Right ventricle myocardium superior (tissue), 1 donor: ENCODE measurements at regions of chr7 and their contacts with region 1.

Region 1: DNA sequence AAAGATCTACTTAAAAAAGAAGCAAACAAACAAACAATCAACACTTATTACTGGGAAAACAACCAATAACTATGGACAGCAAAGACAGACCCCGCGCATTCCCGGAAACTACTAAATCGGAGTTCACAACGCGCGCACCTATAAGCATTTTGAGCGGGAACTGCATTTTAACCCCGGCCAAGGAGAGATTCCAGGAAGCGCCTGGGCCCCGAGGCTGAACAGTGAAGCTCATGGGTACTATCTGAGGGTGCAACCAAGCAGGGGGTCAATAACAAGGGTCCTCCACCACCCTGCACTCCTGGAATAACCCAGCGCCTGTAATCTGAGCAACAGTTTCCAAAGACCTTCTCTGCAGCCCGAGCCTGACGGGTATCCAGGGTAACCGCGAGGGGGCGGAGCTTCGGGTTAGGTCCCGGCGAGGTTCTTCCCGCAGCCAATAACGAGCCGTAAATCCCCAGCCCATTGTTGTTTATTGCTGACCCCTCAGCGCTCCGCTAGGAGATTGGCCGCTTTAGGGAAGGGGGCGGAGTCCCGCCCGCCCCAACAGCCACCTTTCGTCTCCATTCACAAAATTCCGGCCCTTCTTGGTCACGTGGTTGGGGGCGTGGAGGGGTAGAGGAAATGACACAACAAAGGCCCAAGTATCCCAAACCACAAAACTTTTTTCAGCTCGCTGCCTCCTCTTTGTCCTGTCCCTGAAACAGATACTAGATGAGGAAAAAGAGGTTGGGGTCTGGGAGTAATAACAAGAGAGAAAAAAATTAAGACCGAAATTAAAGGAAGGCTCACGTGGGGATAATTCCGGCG is 1.7 kb upstream of the ETV1 start:
- DNase-seq: peak; percentile 96
- ATAC-seq: peak; percentile 95

Region 2: GRCh38 chr7:13682626-13683025 is 308.6 kb before region 1 on chr7:
- intact Hi-C with region 1: no loop called
- DNase-seq: no peak
- ATAC-seq: no peak

Region 3: GRCh38 chr7:13850185-13850752 is 140.9 kb before region 1 on chr7:
- intact Hi-C with region 1: no loop called
- DNase-seq: no peak
- ATAC-seq: peak; percentile 27

Region 4: DNA sequence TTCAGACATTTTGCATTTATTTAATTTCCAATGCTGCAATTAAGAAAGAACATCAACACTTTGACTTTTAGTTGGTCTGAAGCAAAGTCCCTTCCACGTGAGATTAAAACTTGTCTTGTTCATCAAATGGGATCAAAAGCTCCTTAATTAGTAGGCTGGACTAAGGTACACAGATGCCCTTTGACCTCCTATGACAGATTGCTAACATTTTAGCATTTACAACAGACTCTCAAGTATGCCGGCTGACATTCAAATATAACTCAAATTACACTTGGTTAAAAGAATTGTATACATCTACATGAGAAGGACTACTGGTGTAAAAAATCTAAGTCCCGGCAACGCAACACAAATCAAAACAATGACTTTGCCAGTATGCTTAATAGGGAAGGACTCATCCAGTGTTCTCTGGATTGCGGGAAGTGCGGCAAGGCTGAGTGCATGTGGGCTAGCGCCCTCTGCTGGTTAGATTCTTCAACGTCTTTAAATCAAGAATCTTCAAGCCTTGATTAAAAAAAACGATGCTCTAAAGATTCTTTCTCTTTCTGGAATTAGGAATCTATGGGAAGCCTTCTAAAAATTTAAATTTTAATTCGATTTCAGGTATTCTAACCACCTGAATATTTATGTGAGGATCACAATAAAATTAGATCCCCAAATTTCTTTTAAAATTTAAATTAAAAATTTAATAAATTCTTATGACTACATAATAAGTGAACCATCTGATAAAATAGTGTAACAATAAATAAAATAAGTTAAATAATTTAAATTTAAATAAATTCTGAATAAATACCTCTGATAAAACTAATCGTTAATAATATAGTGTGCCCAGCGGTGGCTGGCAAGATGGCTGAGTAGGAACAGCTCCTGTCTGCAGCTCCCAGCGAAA is 466.6 kb after region 1 on chr7:
- intact Hi-C with region 1: loop called (anchors 10 kb)
- DNase-seq: peak; percentile 57
- ATAC-seq: peak; percentile 93